T-cell (primary cell): ENCODE measurements at regions of chr2 and their contacts with region 1.

Region 1: GRCh38 chr2:43149482-43150107 is 76.8 kb downstream of the ZFP36L2 start:
- DNase-seq: peak in 4 of 35 experiments; percentile 35 to 51 (median 42)
- ATAC-seq: peak; percentile 18 to 56 (median 38)
- H3K4me3 ChIP-seq: no peak overlapping the region
- H3K4me3 Mint-ChIP-seq: peak overlapping the region in 2 of 3 donors; percentile 1 to 73
- H3K27ac ChIP-seq: peak overlapping the region; percentile 32
- H3K27ac Mint-ChIP-seq: peak overlapping the region; percentile 77 to 80
- H3K4me1 ChIP-seq: peaks cover 42 to 60% of the 10 kb centered on the region in 2 experiments
- H3K4me1 Mint-ChIP-seq: peaks cover 70 to 76% (median 72%) of the 10 kb centered on the region in 3 donors
- H3K27me3 ChIP-seq: no peaks in the 10 kb centered on the region
- H3K27me3 Mint-ChIP-seq: no peaks in the 10 kb centered on the region

Region 2: GRCh38 chr2:43070039-43070438 is 79.6 kb before region 1 on chr2:
- CTCF ChIA-PET with region 1: no interaction called
- POLR2A ChIA-PET with region 1: no interaction called
- DNase-seq: no peak
- ATAC-seq: no peak
- H3K4me3 ChIP-seq: no peak overlapping the region
- H3K4me3 Mint-ChIP-seq: no peak overlapping the region
- H3K27ac ChIP-seq: no peak overlapping the region
- H3K27ac Mint-ChIP-seq: no peak overlapping the region
- H3K4me1 ChIP-seq: no peaks in the 10 kb centered on the region
- H3K4me1 Mint-ChIP-seq: peaks cover 0 to 5% (median 0%) of the 10 kb centered on the region in 3 donors
- H3K27me3 ChIP-seq: no peaks in the 10 kb centered on the region
- H3K27me3 Mint-ChIP-seq: no peaks in the 10 kb centered on the region

Region 3: GRCh38 chr2:43131024-43131889 is 18.3 kb before region 1 on chr2:
- CTCF ChIA-PET with region 1: interaction called in 1 of 2 experiments, 4 read pairs
- POLR2A ChIA-PET with region 1: interaction called, 3 to 13 read pairs
- DNase-seq: peak; percentile 67 to 98 (median 86)
- ATAC-seq: peak; percentile 40 to 52 (median 47)
- H3K4me3 ChIP-seq: peak overlapping the region; percentile 27 to 49
- H3K4me3 Mint-ChIP-seq: peak overlapping the region; percentile 7 to 63 (median 52)
- H3K27ac ChIP-seq: peak overlapping the region; percentile 92
- H3K27ac Mint-ChIP-seq: peak overlapping the region; percentile 99 to 100
- H3K4me1 ChIP-seq: peaks cover 77 to 97% of the 10 kb centered on the region in 2 experiments
- H3K4me1 Mint-ChIP-seq: peaks cover 89 to 90% (median 89%) of the 10 kb centered on the region in 3 donors
- H3K27me3 ChIP-seq: no peaks in the 10 kb centered on the region
- H3K27me3 Mint-ChIP-seq: no peaks in the 10 kb centered on the region